HepG2 (cell line): ENCODE measurements at regions of chr4 and their contacts with region 1.

Region 1: GRCh38 chr4:171186700-171187099 is 626.5 kb upstream of the GALNTL6 start:
- DNase-seq: no peak
- ATAC-seq: no peak
- H3K4me3 ChIP-seq: no peak overlapping the region
- H3K27ac ChIP-seq: no peak overlapping the region
- H3K4me1 ChIP-seq: no peaks in the 10 kb centered on the region
- H3K27me3 ChIP-seq: no peaks in the 10 kb centered on the region
- CTCF ChIP-seq: no peak
- EP300 ChIP-seq: no peak
- POLR2A ChIP-seq: no peak
- RAD21 ChIP-seq: no peak

Region 2: DNA sequence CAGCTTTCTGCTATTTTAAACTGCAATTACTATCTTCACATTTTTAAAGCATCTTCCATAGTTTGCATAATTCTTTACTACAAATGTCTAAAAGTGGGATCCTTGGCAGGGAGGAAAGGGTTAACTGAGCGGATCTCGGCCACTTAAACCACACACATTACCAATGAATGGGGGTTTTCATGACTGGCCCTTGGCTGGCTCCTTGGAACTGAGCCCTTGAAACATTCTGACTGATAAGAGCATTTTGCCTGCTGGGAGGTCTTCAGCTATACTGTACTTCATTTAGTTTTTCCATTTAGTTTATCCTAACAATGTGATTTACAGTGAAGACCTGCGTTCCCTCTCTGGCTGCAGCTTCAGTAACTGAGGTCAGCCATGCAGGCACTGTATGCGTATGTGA is 1128.8 kb before region 1 on chr4:
- CTCF ChIA-PET with region 1: no interaction called
- POLR2A ChIA-PET with region 1: no interaction called
- in situ Hi-C with region 1: no loop called
- intact Hi-C with region 1: no loop called
- DNase-seq: no peak
- ATAC-seq: no peak
- H3K4me3 ChIP-seq: no peak overlapping the region
- H3K27ac ChIP-seq: no peak overlapping the region
- H3K4me1 ChIP-seq: no peaks in the 10 kb centered on the region
- H3K27me3 ChIP-seq: no peaks in the 10 kb centered on the region
- CTCF ChIP-seq: no peak
- EP300 ChIP-seq: no peak
- POLR2A ChIP-seq: no peak
- RAD21 ChIP-seq: no peak

Region 3: DNA sequence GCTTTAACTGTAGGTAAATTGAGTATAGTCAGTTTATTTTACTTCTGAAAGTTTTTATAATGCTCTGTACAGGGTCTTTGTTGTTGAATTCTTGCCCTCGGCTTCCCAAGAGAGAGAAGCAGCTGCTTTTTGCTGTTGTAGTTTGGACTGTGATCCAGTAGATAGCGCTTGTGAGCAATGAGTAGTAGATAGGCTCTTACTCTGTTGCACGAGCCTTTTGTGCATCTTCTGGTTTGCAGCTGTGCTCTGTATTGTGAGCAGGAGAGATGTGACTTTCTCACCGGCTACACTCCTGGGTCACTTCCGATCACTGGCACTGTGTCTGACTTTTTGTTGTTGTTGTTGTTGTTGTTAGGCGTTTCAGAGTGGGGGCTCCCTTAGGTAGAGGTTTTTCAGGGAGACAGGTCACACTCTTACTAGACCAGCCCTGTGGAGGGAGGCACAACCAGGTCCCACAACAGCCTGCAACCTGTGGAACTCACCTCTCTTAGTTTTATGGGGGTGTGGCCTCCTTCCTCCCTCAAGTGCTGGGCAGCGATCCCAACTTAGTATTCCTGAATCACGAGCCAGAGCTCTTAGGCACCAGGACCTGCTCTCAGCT is 195.6 kb before region 1 on chr4:
- CTCF ChIA-PET with region 1: no interaction called
- POLR2A ChIA-PET with region 1: no interaction called
- in situ Hi-C with region 1: no loop called
- intact Hi-C with region 1: loop called (anchors 5 kb)
- DNase-seq: peak; percentile 23
- ATAC-seq: peak; percentile 75
- H3K4me3 ChIP-seq: no peak overlapping the region
- H3K27ac ChIP-seq: no peak overlapping the region
- H3K4me1 ChIP-seq: no peaks in the 10 kb centered on the region
- H3K27me3 ChIP-seq: no peaks in the 10 kb centered on the region
- CTCF ChIP-seq: peak; percentile 53
- EP300 ChIP-seq: no peak
- POLR2A ChIP-seq: no peak
- RAD21 ChIP-seq: no peak

Region 4: GRCh38 chr4:171266671-171267070 is 80.0 kb after region 1 on chr4:
- CTCF ChIA-PET with region 1: no interaction called
- POLR2A ChIA-PET with region 1: no interaction called
- in situ Hi-C with region 1: no loop called
- intact Hi-C with region 1: no loop called
- DNase-seq: no peak
- ATAC-seq: no peak
- H3K4me3 ChIP-seq: no peak overlapping the region
- H3K27ac ChIP-seq: no peak overlapping the region
- H3K4me1 ChIP-seq: no peaks in the 10 kb centered on the region
- H3K27me3 ChIP-seq: no peaks in the 10 kb centered on the region
- CTCF ChIP-seq: no peak
- EP300 ChIP-seq: no peak
- POLR2A ChIP-seq: no peak
- RAD21 ChIP-seq: no peak